WTC11 (cell line): ENCODE measurements at regions of chr7 and their contacts with region 1.

Region 1: GRCh38 chr7:43439631-43440401 is 143.1 kb upstream of the STK17A start:
- DNase-seq: peak; percentile 79
- ATAC-seq: peak; percentile 94
- H3K4me3 Mint-ChIP-seq: no peak overlapping the region
- H3K27ac Mint-ChIP-seq: no peak overlapping the region
- H3K4me1 Mint-ChIP-seq: peaks cover 29% of the 10 kb centered on the region
- H3K27me3 Mint-ChIP-seq: no peaks in the 10 kb centered on the region; the same call in 1 of the 2 replicates
- CTCF ChIP-seq: peak; percentile 96

Region 2: DNA sequence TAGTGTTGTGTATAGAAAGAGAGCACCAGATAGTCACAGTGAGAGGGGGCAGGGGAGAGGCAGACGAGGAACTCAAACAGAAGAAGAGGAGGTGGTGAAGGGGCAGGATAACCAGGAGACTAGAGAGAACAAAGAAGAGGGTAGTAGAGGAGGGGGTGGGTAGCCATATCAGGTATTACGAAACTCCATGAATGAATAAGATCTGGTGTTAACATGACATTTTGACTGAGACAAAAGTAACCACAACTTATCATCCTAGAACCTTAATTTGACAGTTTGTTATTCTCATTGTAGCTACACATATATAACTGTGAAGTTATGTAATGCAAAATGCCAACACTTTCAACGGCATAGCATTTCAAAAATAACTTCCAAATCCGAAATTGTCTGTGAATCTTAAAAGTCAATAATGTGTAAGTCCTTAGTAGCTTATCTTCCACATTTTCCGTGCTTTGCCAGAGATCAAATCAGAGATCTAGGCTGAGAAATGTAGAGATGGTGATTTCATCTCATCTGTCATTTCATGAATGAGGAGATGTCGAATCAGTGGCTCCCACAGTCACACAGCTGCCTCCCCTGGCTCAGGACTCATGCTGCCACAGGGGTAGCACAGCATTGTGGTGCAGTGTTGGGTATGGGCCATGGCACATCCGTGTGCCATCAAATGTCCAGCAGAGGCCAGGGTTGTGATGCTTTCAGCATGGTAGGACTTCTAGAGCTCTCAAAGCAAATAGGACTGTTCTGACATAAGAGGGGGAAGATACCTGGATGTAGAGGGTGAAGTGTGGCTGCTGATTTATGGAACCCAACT is 125.2 kb before region 1 on chr7:
- CTCF ChIA-PET with region 1: interaction called, 12 read pairs
- POLR2A ChIA-PET with region 1: no interaction called
- DNase-seq: no peak
- ATAC-seq: no peak
- H3K4me3 Mint-ChIP-seq: no peak overlapping the region
- H3K27ac Mint-ChIP-seq: no peak overlapping the region
- H3K4me1 Mint-ChIP-seq: peaks cover 16% of the 10 kb centered on the region
- H3K27me3 Mint-ChIP-seq: no peaks in the 10 kb centered on the region
- CTCF ChIP-seq: no peak

Region 3: DNA sequence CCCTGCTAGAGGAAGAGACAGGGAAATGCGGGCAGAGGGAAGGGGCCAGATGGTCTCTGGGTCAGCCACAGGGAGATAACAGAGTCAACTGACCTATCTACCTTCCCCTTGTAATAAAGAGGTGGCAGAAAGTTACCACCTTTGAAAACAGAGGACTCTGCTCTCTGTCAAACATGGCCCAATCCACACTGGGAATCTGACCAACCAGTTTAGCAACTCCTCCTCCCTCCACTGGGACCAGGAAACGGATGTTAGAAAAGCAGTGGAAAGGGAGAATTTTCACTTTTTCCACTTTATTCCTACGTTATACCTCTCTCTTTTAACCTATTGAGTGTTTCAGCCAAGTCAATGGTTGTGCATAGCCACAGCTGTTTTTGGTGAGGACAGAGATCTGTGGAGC is 106.1 kb before region 1 on chr7:
- CTCF ChIA-PET with region 1: interaction called, 12 read pairs
- POLR2A ChIA-PET with region 1: no interaction called
- DNase-seq: no peak
- ATAC-seq: peak; percentile 30; the same call in 1 of the 2 replicates
- H3K4me3 Mint-ChIP-seq: no peak overlapping the region
- H3K27ac Mint-ChIP-seq: no peak overlapping the region
- H3K4me1 Mint-ChIP-seq: peaks cover 23% of the 10 kb centered on the region
- H3K27me3 Mint-ChIP-seq: no peaks in the 10 kb centered on the region
- CTCF ChIP-seq: no peak

Region 4: DNA sequence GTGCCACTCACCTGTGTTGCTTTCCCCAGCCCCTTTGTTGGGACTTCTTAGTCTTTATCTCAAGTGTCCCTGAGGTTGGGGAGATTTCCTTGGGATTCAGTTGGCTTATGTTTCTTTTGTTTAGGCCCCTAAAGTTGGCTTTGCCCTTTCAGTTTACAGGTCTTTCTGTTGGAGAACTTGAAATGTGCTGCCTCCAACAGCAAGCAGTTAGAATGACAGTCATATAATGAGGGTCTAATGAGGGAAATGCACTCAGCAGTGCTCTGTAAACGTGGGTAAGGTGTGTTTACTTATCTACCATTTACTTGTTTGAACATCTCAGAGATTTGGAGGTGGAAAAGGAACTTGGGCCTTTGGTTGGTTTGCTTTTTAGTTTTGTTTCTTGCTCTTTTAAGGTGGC is 48.3 kb before region 1 on chr7:
- CTCF ChIA-PET with region 1: interaction called, 18 read pairs
- POLR2A ChIA-PET with region 1: no interaction called
- DNase-seq: no peak
- ATAC-seq: peak; percentile 68
- H3K4me3 Mint-ChIP-seq: no peak overlapping the region
- H3K27ac Mint-ChIP-seq: 0 out of 2 replicates have a peak overlapping the region, but pooled peaks have one; percentile 71
- H3K4me1 Mint-ChIP-seq: peaks cover 50% of the 10 kb centered on the region
- H3K27me3 Mint-ChIP-seq: peaks cover 13% of the 10 kb centered on the region
- CTCF ChIP-seq: no peak

Region 5: DNA sequence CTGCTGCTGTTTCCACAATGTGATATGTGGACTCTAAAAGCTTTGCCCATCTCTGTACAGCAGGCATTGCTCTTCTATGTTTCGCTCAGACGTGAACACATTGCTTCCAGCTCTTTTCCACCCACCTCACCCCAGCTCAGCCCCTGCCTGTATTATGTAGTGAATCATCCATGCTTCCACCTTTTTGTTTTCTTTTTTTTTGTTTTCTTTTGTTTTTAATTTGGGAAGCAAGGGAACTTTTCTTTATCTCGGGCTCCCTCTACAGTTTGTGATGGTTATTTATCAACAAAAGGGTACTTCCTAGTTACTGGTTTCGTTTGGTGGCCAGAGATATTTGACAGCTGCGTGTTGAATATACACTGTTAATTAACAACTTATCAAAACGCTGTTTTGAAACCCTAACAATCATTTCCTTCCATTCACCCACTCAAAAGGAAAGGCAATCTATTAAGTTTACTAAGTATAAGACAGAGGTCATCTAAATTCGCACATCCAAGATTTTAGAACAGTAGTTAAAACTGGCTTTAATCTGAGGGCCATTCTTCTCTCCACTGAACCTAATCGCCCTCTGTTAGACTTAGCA is 15.2 kb after region 1 on chr7:
- CTCF ChIA-PET with region 1: interaction called, 25 read pairs
- POLR2A ChIA-PET with region 1: no interaction called
- DNase-seq: no peak
- ATAC-seq: peak; percentile 70
- H3K4me3 Mint-ChIP-seq: no peak overlapping the region
- H3K27ac Mint-ChIP-seq: peak overlapping the region; percentile 61; the same call in 1 of the 2 replicates
- H3K4me1 Mint-ChIP-seq: peaks cover 19% of the 10 kb centered on the region
- H3K27me3 Mint-ChIP-seq: no peaks in the 10 kb centered on the region
- CTCF ChIP-seq: peak; percentile 39; the same call in 1 of the 2 replicates